ENCODE measurements at regions of chr7 and their contacts with region 1.

Region 1: GRCh38 chr7:76069238-76069638 is 21.3 kb downstream of the MDH2 start:
- DNase-seq: peak; percentile 97
- ATAC-seq: peak; percentile 79
- H3K4me3 ChIP-seq: no peak overlapping the region
- H3K27ac ChIP-seq: peak overlapping the region; percentile 73
- H3K4me1 ChIP-seq: peaks cover 33% of the 10 kb centered on the region
- H3K27me3 ChIP-seq: no peaks in the 10 kb centered on the region
- CTCF ChIP-seq: peak; percentile 55

Region 2: GRCh38 chr7:76047811-76048667 is 21.2 kb before region 1 on chr7 and contains the starts of genes MDH2 and STYXL1:
- CTCF ChIA-PET with region 1: interaction called, 9 read pairs
- POLR2A ChIA-PET with region 1: interaction called, 26 read pairs
- intact Hi-C with region 1: no loop called
- DNase-seq: peak; percentile 97
- ATAC-seq: peak; percentile 95
- H3K4me3 ChIP-seq: peak within 1 kb of the TSS; percentile 92
- H3K27ac ChIP-seq: peak within 1 kb of the TSS; percentile 81
- H3K4me1 ChIP-seq: peaks cover 25% of the 10 kb centered on the region
- H3K27me3 ChIP-seq: no peaks in the 10 kb centered on the region
- CTCF ChIP-seq: no peak
- total RNA-seq, gene MDH2: 163 and 174 TPM in 2 replicates
- total RNA-seq, gene STYXL1: 57.4 and 61.3 TPM in 2 replicates

Region 3: DNA sequence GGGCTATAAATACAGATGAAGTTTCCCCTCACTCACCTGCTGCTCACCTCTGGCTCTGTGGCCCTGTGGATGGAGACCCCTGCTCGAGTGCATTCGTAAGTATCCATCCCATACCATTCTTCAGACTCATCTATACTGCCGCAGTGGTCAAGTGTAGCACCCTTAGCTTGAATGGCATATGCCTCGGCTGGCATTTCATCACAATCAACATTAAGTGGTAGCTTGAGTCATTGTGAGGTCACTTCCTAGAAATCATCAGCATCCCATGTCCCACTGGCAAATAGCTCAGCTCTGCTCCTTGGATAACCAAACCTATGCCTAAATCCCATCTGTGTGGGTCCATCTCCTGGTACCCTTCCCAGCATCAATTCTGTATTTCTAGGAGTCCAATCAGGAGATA is 16.8 kb after region 1 on chr7:
- CTCF ChIA-PET with region 1: interaction called, 8 read pairs
- POLR2A ChIA-PET with region 1: interaction called, 16 read pairs
- intact Hi-C with region 1: loop called (anchors 1 kb)
- DNase-seq: peak; percentile 71
- ATAC-seq: no peak
- H3K4me3 ChIP-seq: no peak overlapping the region
- H3K27ac ChIP-seq: peak overlapping the region; percentile 96
- H3K4me1 ChIP-seq: peaks cover 65% of the 10 kb centered on the region
- H3K27me3 ChIP-seq: no peaks in the 10 kb centered on the region
- CTCF ChIP-seq: no peak

Region 4: DNA sequence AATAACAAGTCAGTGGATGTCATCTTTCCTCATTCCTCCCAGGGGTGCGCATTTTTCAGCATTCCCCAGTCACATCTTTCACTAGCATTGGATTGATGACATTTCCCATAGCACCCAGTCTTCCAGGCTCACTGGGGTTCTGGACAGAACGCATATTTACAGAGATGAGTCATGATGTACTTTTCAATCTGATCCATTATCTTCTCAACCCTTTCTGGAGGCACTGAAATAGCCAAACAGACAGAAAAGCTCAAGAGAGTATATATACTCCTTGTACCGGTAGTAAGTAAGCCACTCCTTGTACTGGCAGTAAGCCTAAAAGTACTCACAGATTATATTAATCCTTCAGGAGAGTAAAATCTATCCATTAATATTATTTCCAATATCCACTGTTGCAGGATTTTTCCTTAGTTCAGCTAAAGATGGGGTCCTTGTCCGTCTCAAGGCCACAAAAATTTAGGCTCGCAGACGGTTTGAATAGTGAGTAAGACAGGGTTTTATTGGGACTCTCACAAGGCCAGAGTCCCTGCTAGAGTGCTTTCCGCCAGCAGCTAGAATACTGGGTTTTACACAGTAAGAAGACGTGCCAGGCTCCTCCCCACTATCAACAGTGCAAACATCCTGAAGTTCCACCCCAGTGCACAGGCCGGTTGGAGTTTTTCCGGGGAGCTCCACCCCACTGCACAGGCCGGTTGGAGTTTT is 39.5 kb after region 1 on chr7:
- CTCF ChIA-PET with region 1: interaction called, 4 read pairs
- POLR2A ChIA-PET with region 1: interaction called, 3 read pairs
- intact Hi-C with region 1: loop called (anchors 2 kb)
- DNase-seq: peak; percentile 90
- ATAC-seq: peak; percentile 91
- H3K4me3 ChIP-seq: peak overlapping the region; percentile 60
- H3K27ac ChIP-seq: peak overlapping the region; percentile 98
- H3K4me1 ChIP-seq: peaks cover 40% of the 10 kb centered on the region
- H3K27me3 ChIP-seq: no peaks in the 10 kb centered on the region
- CTCF ChIP-seq: no peak

Region 5: GRCh38 chr7:76133164-76133775 is 64.0 kb after region 1 on chr7:
- CTCF ChIA-PET with region 1: interaction called, 18 read pairs
- POLR2A ChIA-PET with region 1: no interaction called
- intact Hi-C with region 1: loop called (anchors 1 kb)
- DNase-seq: no peak
- ATAC-seq: no peak
- H3K4me3 ChIP-seq: no peak overlapping the region
- H3K27ac ChIP-seq: no peak overlapping the region
- H3K4me1 ChIP-seq: no peaks in the 10 kb centered on the region
- H3K27me3 ChIP-seq: no peaks in the 10 kb centered on the region
- CTCF ChIP-seq: no peak

Measured in PC-3 (cell line).